ENCODE measurements at regions of chr18 and their contacts with region 1.

Region 1: DNA sequence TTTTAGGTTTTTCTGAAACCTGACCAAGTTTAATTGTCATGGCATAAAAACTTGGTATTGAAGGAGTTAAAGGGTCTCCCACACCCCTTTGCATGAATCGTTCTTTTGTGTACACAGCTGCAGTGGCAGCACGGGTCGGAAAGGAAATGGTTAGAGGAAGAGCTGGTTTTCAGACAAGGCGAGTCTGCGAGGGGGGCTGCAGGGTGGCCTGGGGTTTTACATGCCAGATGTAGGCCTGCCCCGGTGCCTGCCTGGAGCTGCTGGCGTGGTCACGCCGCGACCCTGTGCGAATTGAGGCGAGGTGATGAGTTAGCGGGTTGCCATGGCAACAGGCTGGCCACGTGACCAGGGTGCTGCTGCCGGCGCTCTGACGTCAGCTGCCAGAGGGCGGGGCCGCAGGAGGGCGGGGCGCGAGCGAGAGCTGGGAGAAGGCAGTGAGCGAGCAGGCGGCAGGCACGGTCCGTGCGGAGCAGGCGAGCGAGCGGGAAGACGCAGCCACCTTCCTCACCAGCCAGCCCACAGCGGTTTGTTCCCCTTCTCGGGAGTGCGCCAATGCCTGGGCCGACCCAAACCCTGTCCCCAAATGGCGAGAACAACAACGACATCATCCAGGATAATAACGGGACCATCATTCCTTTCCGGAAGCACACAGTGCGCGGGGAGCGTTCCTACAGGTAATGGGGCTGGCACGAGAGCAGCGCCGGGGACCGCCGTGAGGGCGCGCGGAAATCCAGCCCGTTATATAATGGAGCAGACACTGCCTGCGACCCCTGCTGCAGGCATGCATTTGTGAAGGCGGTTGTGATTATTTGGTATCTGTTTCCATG is at the start of gene MAPRE2:
- DNase-seq: peak; percentile 98 to 100 (median 99)
- ATAC-seq: peak; percentile 86 to 87
- H3K4me3 Mint-ChIP-seq: peak within 1 kb of the TSS; percentile 87 to 98 (median 95)
- H3K27ac Mint-ChIP-seq: peak within 1 kb of the TSS; percentile 96 to 99 (median 99)
- H3K4me1 Mint-ChIP-seq: peaks cover 30 to 80% (median 50%) of the 10 kb centered on the region in 4 donors
- H3K27me3 Mint-ChIP-seq: peaks cover 0 to 4% (median 0%) of the 10 kb centered on the region in 5 donors
- polyA plus RNA-seq, gene MAPRE2: 86.2 to 96.3 (median 89.7) TPM

Region 2: GRCh38 chr18:35010993-35011392 is 30.2 kb before region 1 on chr18:
- POLR2A ChIA-PET with region 1: no interaction called
- DNase-seq: no peak
- ATAC-seq: no peak
- H3K4me3 Mint-ChIP-seq: no peak overlapping the region
- H3K27ac Mint-ChIP-seq: no peak overlapping the region
- H3K4me1 Mint-ChIP-seq: peaks cover 0 to 5% (median 0%) of the 10 kb centered on the region in 4 donors
- H3K27me3 Mint-ChIP-seq: no peaks in the 10 kb centered on the region

Region 3: GRCh38 chr18:35029770-35030169 is 11.4 kb before region 1 on chr18:
- POLR2A ChIA-PET with region 1: interaction called, 121 read pairs
- DNase-seq: peak in 3 of 10 donors; percentile 47 to 59 (median 54)
- ATAC-seq: peak; percentile 41 to 43
- H3K4me3 Mint-ChIP-seq: peak overlapping the region; percentile 76 to 96 (median 88)
- H3K27ac Mint-ChIP-seq: peak overlapping the region; percentile 73 to 99 (median 98)
- H3K4me1 Mint-ChIP-seq: peaks cover 35 to 69% (median 67%) of the 10 kb centered on the region in 4 donors
- H3K27me3 Mint-ChIP-seq: no peaks in the 10 kb centered on the region

Region 4: GRCh38 chr18:35060122-35060815 is 19.1 kb after region 1 on chr18:
- POLR2A ChIA-PET with region 1: interaction called, 12 read pairs
- DNase-seq: no peak
- ATAC-seq: no peak
- H3K4me3 Mint-ChIP-seq: peak overlapping the region in 3 of 10 donors; percentile 6 to 49 (median 42)
- H3K27ac Mint-ChIP-seq: peak overlapping the region in 6 of 10 donors; percentile 4 to 87 (median 24)
- H3K4me1 Mint-ChIP-seq: peaks cover 38 to 83% (median 80%) of the 10 kb centered on the region in 4 donors
- H3K27me3 Mint-ChIP-seq: no peaks in the 10 kb centered on the region

Region 5: DNA sequence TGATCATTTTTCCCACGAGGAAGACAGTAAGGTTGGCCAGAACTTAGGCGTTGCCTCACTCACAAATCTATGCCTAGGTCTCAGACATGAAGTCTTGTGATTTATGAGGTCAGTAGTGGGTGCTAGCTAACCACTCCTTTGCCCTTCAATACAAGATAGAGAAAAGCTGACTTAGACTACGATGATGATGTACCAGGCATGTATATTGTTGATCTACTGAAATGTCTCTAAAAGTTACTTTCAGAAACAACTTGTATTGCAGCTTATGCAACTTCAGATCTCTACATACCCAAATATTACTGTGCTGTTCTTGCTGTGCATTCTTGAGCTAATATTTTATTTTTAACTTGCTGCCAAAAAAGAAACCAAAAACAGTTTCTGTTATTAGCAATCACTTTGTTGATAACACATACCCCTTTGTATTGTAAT is 30.6 kb after region 1 on chr18:
- POLR2A ChIA-PET with region 1: no interaction called
- DNase-seq: no peak
- ATAC-seq: no peak
- H3K4me3 Mint-ChIP-seq: no peak overlapping the region
- H3K27ac Mint-ChIP-seq: peak overlapping the region in 9 of 10 donors; percentile 11 to 87 (median 58)
- H3K4me1 Mint-ChIP-seq: peaks cover 32 to 75% (median 69%) of the 10 kb centered on the region in 4 donors
- H3K27me3 Mint-ChIP-seq: no peaks in the 10 kb centered on the region